Left cardiac atrium (tissue), 4 donors: ENCODE measurements at regions of chr11 and their contacts with region 1.

Region 1: GRCh38 chr11:125569915-125570621 is 791 bp downstream of the EI24 start:
- DNase-seq: no peak
- ATAC-seq: no peak

Region 2: GRCh38 chr11:125470355-125470754 is 99.7 kb before region 1 on chr11:
- intact Hi-C with region 1: no loop called
- DNase-seq: no peak
- ATAC-seq: no peak

Region 3: GRCh38 chr11:125618383-125618782 is 48.3 kb after region 1 on chr11:
- intact Hi-C with region 1: loop called (anchors 5 to 10 kb)
- DNase-seq: no peak
- ATAC-seq: no peak

Region 4: GRCh38 chr11:125625630-125626287 is 55.7 kb after region 1 on chr11:
- intact Hi-C with region 1: loop called in 1 of 2 experiments (anchors 10 kb)
- DNase-seq: peak; percentile 89
- ATAC-seq: peak; percentile 95 to 97